ENCODE measurements at regions of chr1 and their contacts with region 1.

Region 1: DNA sequence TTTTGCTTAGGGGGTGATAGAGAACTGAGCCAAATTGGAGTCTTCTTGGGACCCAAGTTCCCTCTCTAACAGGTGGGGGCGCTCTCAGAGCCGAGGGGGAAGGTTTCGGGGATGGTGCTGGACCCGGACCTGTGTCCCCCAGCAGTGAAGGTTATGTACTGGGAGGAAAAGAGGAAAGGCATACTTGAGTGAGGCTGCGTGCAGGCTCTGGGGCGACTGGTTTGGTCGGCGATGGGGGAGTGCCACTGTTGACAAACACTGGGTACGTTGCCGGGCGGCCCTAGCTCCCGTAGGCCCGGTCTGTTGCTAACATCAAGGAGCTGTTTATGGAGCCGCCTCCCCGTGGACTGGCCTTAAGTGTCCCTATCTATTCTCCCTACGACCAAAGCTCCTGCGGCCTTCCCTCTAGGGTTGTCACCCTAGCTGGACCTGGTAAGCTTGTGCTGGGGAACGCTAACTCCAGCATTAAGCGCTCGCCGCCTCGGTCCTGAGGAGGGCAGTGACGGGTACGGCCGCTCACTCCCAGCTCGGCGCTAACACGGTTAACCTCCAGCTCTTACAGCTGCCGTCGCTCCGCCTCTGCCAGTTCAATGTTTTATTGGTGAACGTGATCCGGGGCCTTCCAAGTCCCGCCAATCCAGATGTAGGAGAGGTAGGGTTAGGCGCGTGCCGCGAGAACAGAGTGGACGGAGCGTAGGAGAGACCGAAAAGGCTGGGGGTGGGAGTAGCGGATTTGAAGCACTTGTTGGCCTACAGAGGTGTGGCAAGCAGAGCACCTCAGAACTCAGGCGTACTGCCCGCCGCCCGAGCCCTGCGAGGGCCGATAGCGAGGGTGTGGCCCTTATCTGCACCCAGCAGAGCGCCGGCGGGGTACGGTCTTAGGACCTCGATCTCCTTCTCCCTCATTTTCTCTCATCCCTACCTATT is at the start of gene PPOX:
- DNase-seq: peak; percentile 81 to 97 (median 92)
- ATAC-seq: peak; percentile 91
- H3K4me3 ChIP-seq: peak within 1 kb of the TSS; percentile 58 to 79
- H3K4me3 Mint-ChIP-seq: peak within 1 kb of the TSS; percentile 88
- H3K27ac ChIP-seq: peak within 1 kb of the TSS; percentile 88 to 91
- H3K27ac Mint-ChIP-seq: peak within 1 kb of the TSS; percentile 98
- H3K4me1 ChIP-seq: peaks cover 29% of the 10 kb centered on the region
- H3K4me1 Mint-ChIP-seq: peaks cover 56% of the 10 kb centered on the region
- H3K27me3 ChIP-seq: no peaks in the 10 kb centered on the region
- H3K27me3 Mint-ChIP-seq: no peaks in the 10 kb centered on the region
- CTCF ChIP-seq: peak; percentile 52
- total RNA-seq, gene PPOX: 18.5 to 19.8 TPM

Region 2: GRCh38 chr1:161117759-161118581 is 48.0 kb before region 1 on chr1 and contains the starts of genes NIT1 and PFDN2:
- CTCF ChIA-PET with region 1: no interaction called
- POLR2A ChIA-PET with region 1: no interaction called
- intact Hi-C with region 1: loop called (anchors 2 kb)
- DNase-seq: peak; percentile 67 to 93 (median 84)
- ATAC-seq: peak; percentile 72
- H3K4me3 ChIP-seq: peak within 1 kb of the TSS; percentile 95 to 96
- H3K4me3 Mint-ChIP-seq: peak within 1 kb of the TSS; percentile 93
- H3K27ac ChIP-seq: peak within 1 kb of the TSS; percentile 91 to 93
- H3K27ac Mint-ChIP-seq: peak within 1 kb of the TSS; percentile 95
- H3K4me1 ChIP-seq: peaks cover 43% of the 10 kb centered on the region
- H3K4me1 Mint-ChIP-seq: peaks cover 60% of the 10 kb centered on the region
- H3K27me3 ChIP-seq: no peaks in the 10 kb centered on the region
- H3K27me3 Mint-ChIP-seq: no peaks in the 10 kb centered on the region
- CTCF ChIP-seq: no peak
- total RNA-seq, gene NIT1: 11.5 to 12.8 TPM
- total RNA-seq, gene PFDN2: 64.7 to 75.5 TPM

Region 3: DNA sequence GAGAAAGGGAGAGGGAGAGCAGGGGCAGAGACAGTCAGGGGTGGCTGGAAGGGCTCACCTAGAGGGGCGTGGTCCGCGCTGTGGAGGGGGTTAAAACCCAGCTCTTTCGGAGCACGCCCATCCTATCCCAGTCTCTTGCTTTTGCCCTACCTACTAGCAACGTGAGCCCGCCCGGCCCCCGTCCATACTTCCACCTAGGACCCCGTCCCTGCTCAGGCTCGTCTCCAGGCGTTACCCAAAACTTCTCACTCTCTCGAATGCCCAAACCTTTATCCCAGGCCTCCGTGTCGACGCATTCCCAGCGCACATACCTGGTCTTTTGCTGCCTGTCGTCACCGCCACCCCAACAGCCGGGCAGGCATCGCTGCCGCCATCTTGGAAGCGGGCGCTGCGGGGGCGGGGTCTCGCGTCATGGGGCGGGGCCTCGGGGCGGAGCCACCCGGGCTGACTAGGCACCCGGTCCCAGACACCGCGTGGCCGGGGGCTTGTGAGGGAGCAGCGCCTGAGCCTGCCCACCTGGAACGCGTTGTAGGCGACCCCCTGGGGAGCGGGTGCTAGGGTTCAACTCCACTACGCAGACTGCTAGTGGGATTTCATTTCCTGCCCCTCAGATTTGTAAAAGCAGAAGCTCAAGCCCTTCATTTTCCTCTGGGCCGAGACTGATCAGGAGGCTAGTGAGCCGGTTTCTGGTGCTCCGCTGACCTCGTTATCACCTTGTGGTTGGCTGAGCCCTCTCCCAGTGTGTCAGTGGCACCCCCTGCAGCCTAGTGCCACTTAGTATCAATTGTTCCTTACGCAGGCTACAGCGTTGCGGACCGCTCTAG is 11.3 kb after region 1 on chr1 and contains the start of gene B4GALT3:
- CTCF ChIA-PET with region 1: interaction called, 27 read pairs
- POLR2A ChIA-PET with region 1: interaction called, 36 read pairs
- intact Hi-C with region 1: loop called (anchors 1 kb)
- DNase-seq: peak; percentile 88 to 97 (median 90)
- ATAC-seq: peak; percentile 89
- H3K4me3 ChIP-seq: peak within 1 kb of the TSS; percentile 90 to 92
- H3K4me3 Mint-ChIP-seq: peak within 1 kb of the TSS; percentile 98
- H3K27ac ChIP-seq: peak within 1 kb of the TSS; percentile 80 to 87
- H3K27ac Mint-ChIP-seq: peak within 1 kb of the TSS; percentile 99
- H3K4me1 ChIP-seq: peaks cover 50% of the 10 kb centered on the region
- H3K4me1 Mint-ChIP-seq: peaks cover 75% of the 10 kb centered on the region
- H3K27me3 ChIP-seq: no peaks in the 10 kb centered on the region
- H3K27me3 Mint-ChIP-seq: no peaks in the 10 kb centered on the region
- CTCF ChIP-seq: no peak
- total RNA-seq, gene B4GALT3: 33.8 to 36.4 TPM

Region 4: DNA sequence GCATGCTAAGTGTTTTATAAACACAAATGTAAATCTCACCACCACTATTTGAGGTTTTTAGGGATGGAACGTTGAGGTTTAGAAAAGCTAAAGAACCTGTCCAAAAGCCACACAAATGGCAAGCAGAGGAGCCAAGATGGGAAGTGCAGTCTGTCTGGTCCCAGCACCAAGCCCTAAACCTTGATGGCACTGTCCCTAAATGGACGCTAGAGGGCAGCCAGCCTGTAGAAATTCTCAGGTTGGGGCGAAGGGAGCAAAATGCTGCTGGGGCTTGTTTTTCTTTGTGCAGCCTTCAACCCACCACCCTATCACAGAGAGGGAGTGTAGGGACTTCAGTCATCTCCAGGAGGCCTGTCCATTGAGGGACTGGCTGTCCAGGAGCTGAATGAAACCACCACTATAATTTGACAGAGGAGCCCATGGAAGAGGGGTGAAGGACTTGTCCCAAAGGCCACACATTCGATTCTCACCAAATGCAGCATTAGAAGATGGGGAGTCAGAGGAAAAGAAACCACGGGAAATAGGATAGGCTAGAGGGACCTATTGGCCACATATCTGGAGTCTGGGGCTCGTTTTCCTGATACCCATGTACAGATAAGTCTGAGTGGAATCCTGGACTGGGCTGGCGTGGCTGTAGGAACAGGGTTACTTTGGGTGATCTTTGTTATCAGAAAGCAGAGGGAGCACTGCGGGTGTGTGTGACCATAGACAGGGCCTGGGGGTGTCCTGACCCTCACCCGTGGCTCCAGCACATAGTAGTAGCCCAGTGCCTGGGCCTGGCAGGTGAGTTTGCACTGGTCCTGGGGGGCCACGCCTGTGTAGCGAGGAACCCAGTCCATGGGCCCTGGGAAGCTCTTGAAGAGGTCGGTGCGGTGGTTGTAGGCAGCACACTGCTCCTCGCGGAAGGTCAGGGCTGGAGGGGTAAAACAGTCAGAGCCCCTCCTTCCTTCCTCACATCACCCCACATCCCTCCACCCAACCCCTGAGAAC is 26.8 kb after region 1 on chr1:
- CTCF ChIA-PET with region 1: interaction called, 55 read pairs
- POLR2A ChIA-PET with region 1: interaction called, 7 read pairs
- intact Hi-C with region 1: loop called in 1 of 2 experiments (anchors 1 kb)
- DNase-seq: peak; percentile 39 to 85 (median 70)
- ATAC-seq: peak; percentile 98
- H3K4me3 ChIP-seq: no peak overlapping the region
- H3K4me3 Mint-ChIP-seq: no peak overlapping the region
- H3K27ac ChIP-seq: peak overlapping the region in 1 of 2 experiments; percentile 41
- H3K27ac Mint-ChIP-seq: peak overlapping the region; percentile 70
- H3K4me1 ChIP-seq: peaks cover 37% of the 10 kb centered on the region
- H3K4me1 Mint-ChIP-seq: peaks cover 40% of the 10 kb centered on the region
- H3K27me3 ChIP-seq: no peaks in the 10 kb centered on the region
- H3K27me3 Mint-ChIP-seq: no peaks in the 10 kb centered on the region
- CTCF ChIP-seq: peak; percentile 75

Region 5: DNA sequence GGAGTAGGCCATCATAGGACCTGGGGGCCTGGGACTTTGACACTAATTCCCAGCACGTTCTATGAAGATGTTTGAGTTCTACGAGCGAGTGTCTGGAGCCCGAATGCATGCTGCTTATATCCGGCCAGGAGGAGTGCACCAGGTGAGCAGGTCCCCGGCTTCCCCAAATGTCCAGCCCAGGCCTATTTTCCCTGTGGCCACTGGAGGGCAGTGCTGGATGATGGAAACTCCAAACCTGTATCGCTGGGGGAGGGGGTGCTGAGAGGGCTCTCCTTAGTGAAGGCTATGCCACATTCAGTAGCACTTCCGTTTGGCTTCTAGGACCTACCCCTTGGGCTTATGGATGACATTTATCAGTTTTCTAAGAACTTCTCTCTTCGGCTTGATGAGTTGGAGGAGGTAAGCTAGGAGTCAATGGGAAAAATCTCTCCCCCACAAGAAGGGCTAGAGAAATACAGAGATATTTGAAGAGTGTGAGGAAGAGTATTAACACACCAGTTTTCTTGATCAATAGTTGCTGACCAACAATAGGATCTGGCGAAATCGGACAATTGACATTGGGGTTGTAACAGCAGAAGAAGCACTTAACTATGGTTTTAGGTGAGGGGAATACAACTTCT is 43.9 kb after region 1 on chr1:
- CTCF ChIA-PET with region 1: interaction called, 13 read pairs
- POLR2A ChIA-PET with region 1: interaction called, 3 read pairs
- intact Hi-C with region 1: no loop called
- DNase-seq: peak; percentile 48 to 85 (median 74)
- ATAC-seq: peak; percentile 99
- H3K4me3 ChIP-seq: no peak overlapping the region
- H3K4me3 Mint-ChIP-seq: no peak overlapping the region
- H3K27ac ChIP-seq: peak overlapping the region in 1 of 2 experiments; percentile 11
- H3K27ac Mint-ChIP-seq: peak overlapping the region; percentile 50
- H3K4me1 ChIP-seq: peaks cover 20% of the 10 kb centered on the region
- H3K4me1 Mint-ChIP-seq: peaks cover 37% of the 10 kb centered on the region
- H3K27me3 ChIP-seq: no peaks in the 10 kb centered on the region
- H3K27me3 Mint-ChIP-seq: no peaks in the 10 kb centered on the region
- CTCF ChIP-seq: peak; percentile 60

Region 6: DNA sequence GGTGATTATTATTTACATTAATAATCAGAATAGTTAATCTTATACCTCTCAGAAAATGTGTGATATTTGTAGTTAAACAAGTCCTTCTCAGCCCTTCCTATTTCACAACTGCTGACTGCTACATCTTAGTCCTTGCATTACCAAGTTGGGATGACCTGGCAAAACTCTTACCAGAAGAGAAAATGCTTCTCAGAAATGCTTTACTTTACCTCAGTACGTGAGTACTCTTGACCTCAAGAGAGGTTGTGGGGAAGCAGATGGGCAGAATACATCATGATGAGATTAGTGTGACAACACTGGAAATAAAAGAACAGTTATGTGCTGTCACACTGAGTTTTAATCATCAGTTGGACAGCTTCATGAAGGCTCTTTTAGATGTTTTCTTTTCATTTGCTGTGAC is 185.5 kb after region 1 on chr1:
- CTCF ChIA-PET with region 1: no interaction called
- POLR2A ChIA-PET with region 1: no interaction called
- intact Hi-C with region 1: no loop called
- DNase-seq: no peak
- ATAC-seq: no peak
- H3K4me3 ChIP-seq: no peak overlapping the region
- H3K4me3 Mint-ChIP-seq: no peak overlapping the region
- H3K27ac ChIP-seq: no peak overlapping the region
- H3K27ac Mint-ChIP-seq: no peak overlapping the region
- H3K4me1 ChIP-seq: no peaks in the 10 kb centered on the region
- H3K4me1 Mint-ChIP-seq: peaks cover 15% of the 10 kb centered on the region
- H3K27me3 ChIP-seq: no peaks in the 10 kb centered on the region
- H3K27me3 Mint-ChIP-seq: no peaks in the 10 kb centered on the region
- CTCF ChIP-seq: no peak

Region 7: DNA sequence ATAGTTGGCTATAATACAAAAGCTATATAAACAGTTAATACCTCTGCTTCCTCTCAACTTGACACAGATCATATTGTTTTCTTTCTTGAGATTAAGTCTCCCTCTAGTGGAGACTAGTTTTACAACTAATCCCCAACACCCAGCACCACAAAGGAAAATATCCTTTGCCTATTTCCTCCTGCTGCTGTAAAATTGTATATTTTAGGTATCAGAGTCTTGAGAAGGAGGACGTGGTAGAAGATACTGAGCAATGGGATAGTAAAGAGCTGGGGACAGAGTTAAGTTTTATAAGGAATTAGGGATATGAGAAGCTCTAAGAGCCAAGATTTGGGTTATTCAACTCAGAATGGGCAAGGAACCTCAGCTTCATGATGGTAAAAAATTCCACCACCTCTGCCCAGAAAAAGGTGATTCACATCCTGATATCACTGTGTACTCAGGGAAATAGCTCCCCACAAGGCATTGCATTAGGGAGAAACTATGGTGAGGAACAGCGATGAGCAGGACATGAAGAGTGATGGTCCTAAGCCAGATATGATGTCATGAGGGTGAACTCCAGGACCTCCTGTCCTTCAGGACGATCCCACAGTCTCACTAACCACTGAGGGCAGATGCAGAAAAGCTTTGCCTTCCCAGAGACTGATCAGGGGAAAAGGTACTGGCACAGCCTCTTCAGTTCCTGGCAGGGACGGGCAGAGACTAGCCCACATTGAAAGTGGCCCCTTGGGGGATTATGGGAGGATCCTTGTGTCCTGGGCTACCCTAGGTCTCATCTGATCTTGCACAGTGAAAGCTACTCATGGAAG is 216.4 kb after region 1 on chr1:
- CTCF ChIA-PET with region 1: interaction called, 27 read pairs
- POLR2A ChIA-PET with region 1: no interaction called
- intact Hi-C with region 1: no loop called
- DNase-seq: peak in 2 of 9 experiments; percentile 60 to 73
- ATAC-seq: peak; percentile 88
- H3K4me3 ChIP-seq: no peak overlapping the region
- H3K4me3 Mint-ChIP-seq: no peak overlapping the region
- H3K27ac ChIP-seq: no peak overlapping the region
- H3K27ac Mint-ChIP-seq: no peak overlapping the region
- H3K4me1 ChIP-seq: peaks cover 4% of the 10 kb centered on the region
- H3K4me1 Mint-ChIP-seq: peaks cover 12% of the 10 kb centered on the region
- H3K27me3 ChIP-seq: no peaks in the 10 kb centered on the region
- H3K27me3 Mint-ChIP-seq: no peaks in the 10 kb centered on the region
- CTCF ChIP-seq: peak; percentile 83

Measured in CD8-positive, alpha-beta T cell (primary cell).